Panc1 (cell line): ENCODE measurements at regions of chr12 and their contacts with region 1.

Region 1: DNA sequence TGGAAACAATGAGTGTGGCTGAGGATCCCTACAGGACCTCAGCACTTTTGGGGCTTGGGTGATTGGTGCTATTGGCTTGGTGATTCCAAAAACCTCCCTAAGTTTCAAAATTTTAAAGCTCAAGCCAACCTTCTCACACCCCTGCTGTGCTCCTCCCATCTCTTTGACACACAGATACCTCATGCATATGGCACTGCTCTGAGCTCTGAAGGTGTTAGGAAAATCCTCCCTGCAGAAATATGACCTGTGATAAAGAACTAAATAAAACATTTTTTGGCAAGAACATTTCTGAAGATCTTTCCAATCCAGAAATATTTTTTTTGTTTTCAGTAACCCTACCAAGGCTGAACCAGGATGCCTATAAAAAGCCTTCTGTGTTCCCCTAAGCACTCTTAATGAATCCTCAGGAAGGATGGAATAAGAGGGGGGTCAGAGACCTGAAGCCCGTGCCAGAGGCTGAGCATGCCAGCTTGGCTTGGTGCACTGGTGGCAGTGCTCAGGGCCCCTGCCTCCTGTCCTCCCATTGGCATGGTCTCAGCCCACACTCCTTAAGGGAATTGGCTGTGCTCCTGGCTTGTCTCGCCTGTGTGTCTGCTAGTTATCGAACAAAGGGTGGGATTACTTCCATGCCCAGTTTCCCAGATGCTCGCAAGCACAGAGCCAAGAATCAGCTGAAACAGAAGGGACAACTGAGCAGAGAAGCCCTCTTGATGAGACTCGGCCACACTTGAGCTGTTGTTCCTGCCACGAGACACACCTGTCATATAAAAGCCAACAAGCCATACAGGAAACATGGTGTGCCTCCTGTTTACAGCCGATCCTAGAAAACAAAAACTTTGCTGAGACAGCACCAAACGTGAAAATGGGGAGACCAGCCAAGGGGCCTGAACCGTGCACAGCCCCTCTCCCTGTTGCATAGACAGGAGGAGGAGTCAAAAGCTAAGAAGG is 132.7 kb upstream of the EEA1 start:
- DNase-seq: no peak
- ATAC-seq: no peak
- H3K4me3 ChIP-seq: no peak overlapping the region
- H3K27ac ChIP-seq: no peak overlapping the region
- H3K4me1 ChIP-seq: no peaks in the 10 kb centered on the region
- H3K27me3 ChIP-seq: no peaks in the 10 kb centered on the region
- CTCF ChIP-seq: no peak

Region 2: DNA sequence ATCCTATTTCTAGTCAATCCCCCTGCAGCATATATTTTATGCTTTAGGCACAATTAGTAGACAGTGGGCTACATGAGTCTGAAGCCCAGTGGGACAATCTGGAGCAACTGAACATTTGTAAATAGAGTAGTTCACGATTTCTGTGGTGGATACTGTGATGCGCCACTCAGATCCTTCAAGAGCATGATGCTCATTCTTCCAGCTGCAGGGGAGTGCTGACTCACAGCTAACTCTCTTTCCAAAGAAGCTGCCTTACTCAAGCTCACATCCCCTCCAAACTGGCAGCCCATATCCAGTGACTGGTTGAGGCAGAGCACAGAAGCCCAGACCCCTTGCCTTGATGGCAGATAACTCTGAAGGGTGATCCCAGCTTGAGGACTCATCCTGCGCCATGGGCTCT is 91.6 kb after region 1 on chr12:
- CTCF ChIA-PET with region 1: no interaction called
- POLR2A ChIA-PET with region 1: interaction called, 11 read pairs
- in situ Hi-C with region 1: no loop called
- intact Hi-C with region 1: no loop called
- DNase-seq: no peak
- ATAC-seq: no peak
- H3K4me3 ChIP-seq: no peak overlapping the region
- H3K27ac ChIP-seq: no peak overlapping the region
- H3K4me1 ChIP-seq: no peaks in the 10 kb centered on the region
- H3K27me3 ChIP-seq: peaks cover 4% of the 10 kb centered on the region; the same call in 1 of the 2 replicates
- CTCF ChIP-seq: no peak